Activated CD4-positive, alpha-beta T cell treated with anti-CD3 and anti-CD28 coated beads, Interleukin-2, amount 10 ng/mL, durations not matched to agents 24 days and 14 days (primary cell): ENCODE measurements at regions of chr18 and their contacts with region 1.

Region 1: DNA sequence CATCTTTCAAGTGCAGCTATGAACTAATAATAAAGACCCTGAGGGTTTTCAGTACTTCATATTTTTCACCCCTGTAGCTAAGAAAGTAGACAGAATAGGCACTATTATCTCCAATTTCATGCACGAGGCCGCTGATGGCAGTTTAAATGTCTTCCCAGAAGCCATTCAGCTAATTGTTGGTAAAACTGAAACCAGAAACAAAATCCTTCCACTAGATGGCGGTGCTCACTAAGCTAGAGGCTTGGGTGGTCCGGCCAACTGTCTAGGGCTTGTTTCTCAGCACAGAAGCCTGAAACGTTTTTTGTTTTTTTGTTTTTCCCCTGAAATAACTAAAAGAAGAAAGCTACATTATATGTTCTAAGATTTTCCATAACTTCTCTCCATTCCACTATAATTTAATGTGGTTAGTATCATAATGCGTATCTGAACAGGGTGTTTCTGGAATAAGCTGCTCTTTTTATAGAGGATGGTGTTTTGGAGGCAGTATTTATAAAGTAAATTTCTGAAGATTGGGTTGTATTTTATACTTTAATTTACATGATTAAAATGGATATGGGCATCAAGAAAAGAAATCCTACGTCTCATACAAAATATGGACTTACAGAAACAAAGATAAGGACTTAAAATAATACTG is 159.4 kb downstream of the PIK3C3 start:
- DNase-seq: peak; percentile 89
- H3K4me3 Mint-ChIP-seq: no peak overlapping the region
- H3K27ac Mint-ChIP-seq: no peak overlapping the region
- H3K4me1 Mint-ChIP-seq: peaks cover 10% of the 10 kb centered on the region
- H3K27me3 Mint-ChIP-seq: peaks cover 13% of the 10 kb centered on the region

Region 2: GRCh38 chr18:41681138-41681888 is 433.1 kb before region 1 on chr18:
- intact Hi-C with region 1: no loop called
- DNase-seq: no peak
- H3K4me3 Mint-ChIP-seq: no peak overlapping the region
- H3K27ac Mint-ChIP-seq: no peak overlapping the region
- H3K4me1 Mint-ChIP-seq: no peaks in the 10 kb centered on the region
- H3K27me3 Mint-ChIP-seq: no peaks in the 10 kb centered on the region

Region 3: DNA sequence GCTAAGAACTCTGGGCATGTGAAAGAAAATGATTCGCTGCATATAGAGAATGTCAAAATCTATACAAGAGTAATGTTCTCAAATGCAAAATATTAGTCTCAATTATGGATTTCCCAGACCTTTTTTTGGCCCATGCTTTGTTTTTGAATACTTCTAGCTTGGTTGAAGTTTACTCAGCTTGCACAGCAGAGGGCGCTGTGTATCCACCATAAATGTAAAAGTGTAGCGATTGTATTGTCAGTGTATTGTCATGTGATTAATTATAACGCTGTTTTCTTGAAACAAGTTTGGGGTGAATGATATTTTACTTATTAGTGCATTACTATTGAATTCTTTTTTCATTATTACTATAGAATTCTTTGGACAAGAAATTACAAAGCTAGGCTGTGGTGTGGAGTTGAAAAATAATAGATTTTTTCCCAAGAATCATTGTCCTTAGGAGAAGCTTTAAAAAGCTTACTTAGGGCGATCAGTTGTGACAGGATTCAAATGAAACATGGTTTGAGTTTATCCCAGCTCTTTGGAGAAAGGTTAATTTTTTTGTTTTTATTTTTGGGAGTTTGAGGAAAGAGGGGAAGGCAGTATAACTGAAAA is 61.1 kb before region 1 on chr18:
- intact Hi-C with region 1: loop called (anchors 2 kb)
- DNase-seq: peak; percentile 87
- H3K4me3 Mint-ChIP-seq: no peak overlapping the region
- H3K27ac Mint-ChIP-seq: no peak overlapping the region
- H3K4me1 Mint-ChIP-seq: peaks cover 2% of the 10 kb centered on the region
- H3K27me3 Mint-ChIP-seq: no peaks in the 10 kb centered on the region

Region 4: GRCh38 chr18:42274488-42275137 is 160.2 kb after region 1 on chr18:
- intact Hi-C with region 1: loop called (anchors 5 kb)
- DNase-seq: no peak
- H3K4me3 Mint-ChIP-seq: no peak overlapping the region
- H3K27ac Mint-ChIP-seq: no peak overlapping the region
- H3K4me1 Mint-ChIP-seq: no peaks in the 10 kb centered on the region
- H3K27me3 Mint-ChIP-seq: no peaks in the 10 kb centered on the region

Region 5: DNA sequence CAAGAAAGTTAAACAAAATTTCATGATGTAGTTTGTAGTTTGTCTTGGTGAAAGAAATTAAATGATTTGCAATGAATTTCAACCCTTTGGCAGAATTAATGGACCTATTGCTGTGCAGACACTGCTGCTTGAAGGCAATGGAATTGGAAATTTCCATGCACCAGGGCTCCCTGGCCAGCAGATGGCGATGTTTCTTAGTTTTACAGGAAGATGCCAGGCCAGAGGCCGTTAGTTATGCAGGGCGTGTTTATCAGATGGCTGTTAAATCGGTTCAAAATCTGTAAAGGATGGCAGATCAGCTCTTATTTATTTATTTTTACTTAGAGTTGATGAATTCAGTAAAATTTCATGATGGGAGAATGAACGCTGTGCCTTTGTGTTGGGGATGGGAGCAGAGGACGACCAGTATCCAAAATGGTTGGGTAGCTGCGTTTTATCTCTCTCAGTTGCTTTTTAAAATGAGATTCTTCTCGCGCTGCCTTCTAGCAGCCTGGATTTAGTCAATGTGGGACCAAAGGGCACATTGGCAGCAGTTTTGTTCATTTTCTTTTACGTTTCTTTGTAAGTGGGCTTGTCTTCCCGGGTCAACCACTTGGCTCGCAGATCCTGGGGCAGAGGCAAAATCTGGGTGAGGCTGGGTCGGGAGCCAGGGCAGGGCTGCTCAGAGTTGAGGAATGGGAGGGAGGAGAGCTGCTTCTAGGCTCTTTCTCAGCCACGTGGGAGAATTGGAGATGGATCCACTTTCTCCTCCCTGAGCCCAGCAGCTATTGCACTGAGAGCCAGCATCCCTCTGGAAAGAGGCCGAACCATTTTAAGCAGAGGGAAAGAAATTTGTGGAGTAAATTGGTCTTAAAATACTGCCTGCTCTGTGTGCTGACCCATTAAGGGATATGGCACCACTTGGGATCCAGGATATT is 184.6 kb after region 1 on chr18:
- intact Hi-C with region 1: loop called (anchors 5 kb)
- DNase-seq: peak; percentile 86
- H3K4me3 Mint-ChIP-seq: no peak overlapping the region
- H3K27ac Mint-ChIP-seq: no peak overlapping the region
- H3K4me1 Mint-ChIP-seq: no peaks in the 10 kb centered on the region
- H3K27me3 Mint-ChIP-seq: no peaks in the 10 kb centered on the region

Region 6: GRCh38 chr18:43271593-43272432 is 1157.4 kb after region 1 on chr18:
- intact Hi-C with region 1: loop called (anchors 1 kb)
- DNase-seq: peak; percentile 77
- H3K4me3 Mint-ChIP-seq: no peak overlapping the region
- H3K27ac Mint-ChIP-seq: no peak overlapping the region
- H3K4me1 Mint-ChIP-seq: no peaks in the 10 kb centered on the region
- H3K27me3 Mint-ChIP-seq: peaks cover 2% of the 10 kb centered on the region

Region 7: DNA sequence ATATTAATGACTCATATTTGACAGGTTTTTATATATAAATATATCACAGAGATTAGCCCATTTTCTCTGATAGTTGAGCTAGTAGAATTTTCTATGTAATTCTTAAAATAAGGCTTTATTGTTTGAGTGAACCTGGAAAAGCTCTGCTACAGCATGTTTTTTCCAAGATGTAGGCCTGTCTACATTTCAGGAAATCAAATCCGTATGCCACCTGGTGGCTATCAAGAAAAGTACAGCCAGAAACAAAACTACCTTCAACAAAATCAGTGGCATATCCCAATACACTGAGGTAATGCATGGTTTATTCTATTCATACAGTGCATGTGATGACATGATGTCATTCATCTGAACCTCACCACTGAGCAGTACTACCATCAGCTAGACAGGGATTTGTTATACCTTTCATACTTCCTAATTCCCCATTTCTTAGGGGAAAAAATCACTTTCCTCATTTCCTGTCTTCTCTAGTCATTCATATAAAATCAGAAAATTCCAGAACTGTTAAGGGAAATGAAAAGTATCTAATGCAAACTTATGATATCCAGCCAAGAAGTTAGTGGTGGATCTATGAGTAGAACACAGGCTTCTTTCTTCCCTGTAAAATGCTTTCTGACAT is 1473.2 kb after region 1 on chr18:
- intact Hi-C with region 1: loop called (anchors 5 kb)
- DNase-seq: no peak
- H3K4me3 Mint-ChIP-seq: no peak overlapping the region
- H3K27ac Mint-ChIP-seq: no peak overlapping the region
- H3K4me1 Mint-ChIP-seq: no peaks in the 10 kb centered on the region
- H3K27me3 Mint-ChIP-seq: no peaks in the 10 kb centered on the region